A549 (cell line): ENCODE measurements at regions of chr3 and their contacts with region 1.

Region 1: GRCh38 chr3:168040607-168041208 is 55.0 kb downstream of the GOLIM4 start:
- DNase-seq: peak; percentile 7 to 57
- ATAC-seq: peak; percentile 74 to 82; a peak in 5 of 6 replicates
- H3K4me3 ChIP-seq: no peak overlapping the region
- H3K27ac ChIP-seq: no peak overlapping the region
- H3K4me1 ChIP-seq: no peaks in the 10 kb centered on the region
- CTCF ChIP-seq: peak; percentile 56
- EP300 ChIP-seq: no peak
- POLR2A ChIP-seq: no peak
- RAD21 ChIP-seq: peak; percentile 53 to 54

Region 2: GRCh38 chr3:167380004-167380689 is 660.6 kb before region 1 on chr3 and contains the start of gene ZBBX:
- CTCF ChIA-PET with region 1: interaction called, 10 read pairs
- POLR2A ChIA-PET with region 1: no interaction called
- DNase-seq: peak; percentile 4 to 72
- ATAC-seq: peak; percentile 97 to 99
- H3K4me3 ChIP-seq: peak within 1 kb of the TSS; percentile 36
- H3K27ac ChIP-seq: 0 out of 6 replicates have a peak within 1 kb of the TSS, but pooled peaks of 1 of the 2 experiments have one; percentile 38
- H3K4me1 ChIP-seq: no peaks in the 10 kb centered on the region
- CTCF ChIP-seq: peak; percentile 69
- EP300 ChIP-seq: no peak
- POLR2A ChIP-seq: no peak
- RAD21 ChIP-seq: peak; percentile 58 to 63
- polyA plus RNA-seq, gene ZBBX: 0.04 and 0.05 TPM in 2 replicates

Region 3: DNA sequence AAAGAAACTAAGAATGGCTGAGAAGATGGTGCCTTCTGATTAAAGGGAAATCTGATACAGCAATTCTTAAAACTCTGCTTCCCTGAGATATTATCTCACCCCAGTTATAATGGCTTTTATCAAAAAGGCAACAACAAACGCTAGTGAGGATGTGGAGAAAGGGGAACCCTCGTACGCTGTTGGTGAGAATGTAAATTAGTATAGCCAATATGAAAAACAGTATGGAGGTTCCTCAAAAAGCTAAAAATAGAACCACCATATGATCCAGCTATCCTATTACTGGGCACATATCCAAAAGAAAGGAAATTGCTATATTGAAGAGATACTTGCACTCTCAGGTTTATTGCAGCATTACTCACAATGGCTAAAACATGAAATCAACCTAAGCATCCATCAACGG is 10.1 kb before region 1 on chr3:
- CTCF ChIA-PET with region 1: interaction called, 10 read pairs
- POLR2A ChIA-PET with region 1: no interaction called
- DNase-seq: no peak
- ATAC-seq: no peak
- H3K4me3 ChIP-seq: no peak overlapping the region
- H3K27ac ChIP-seq: no peak overlapping the region
- H3K4me1 ChIP-seq: no peaks in the 10 kb centered on the region
- CTCF ChIP-seq: no peak
- EP300 ChIP-seq: no peak
- POLR2A ChIP-seq: no peak
- RAD21 ChIP-seq: no peak